ENCODE measurements at regions of chr15 and their contacts with region 1.

Region 1: GRCh38 chr15:44130778-44131177 is 64.3 kb downstream of the FRMD5 start:
- DNase-seq: peak; percentile 8
- H3K4me3 Mint-ChIP-seq: no peak overlapping the region
- H3K27ac Mint-ChIP-seq: no peak overlapping the region
- H3K4me1 Mint-ChIP-seq: no peaks in the 10 kb centered on the region
- H3K27me3 Mint-ChIP-seq: no peaks in the 10 kb centered on the region
- CTCF ChIP-seq: peak; percentile 58

Region 2: DNA sequence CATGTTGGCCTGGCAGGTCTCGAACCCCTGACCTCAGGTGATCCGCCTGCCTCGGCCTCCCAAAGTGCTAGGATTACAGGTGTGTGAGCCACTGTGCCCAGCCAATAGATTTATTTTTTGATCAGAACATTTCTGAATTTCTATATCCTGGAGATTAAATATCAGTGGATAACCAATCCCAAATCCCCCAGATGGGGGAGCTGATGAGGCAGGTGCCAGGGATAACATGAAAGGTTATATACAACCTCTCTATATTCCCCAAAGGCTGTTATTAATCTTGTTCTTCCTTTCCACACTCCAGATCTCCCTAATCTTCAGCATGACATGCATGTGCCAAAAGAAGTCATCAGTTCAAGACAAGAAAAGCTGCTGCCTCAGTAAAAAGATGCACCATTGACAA is 191.7 kb before region 1 on chr15:
- CTCF ChIA-PET with region 1: interaction called, 3 read pairs
- POLR2A ChIA-PET with region 1: no interaction called
- intact Hi-C with region 1: loop called (anchors 1 kb)
- DNase-seq: peak; percentile 47
- H3K4me3 Mint-ChIP-seq: no peak overlapping the region
- H3K27ac Mint-ChIP-seq: no peak overlapping the region
- H3K4me1 Mint-ChIP-seq: no peaks in the 10 kb centered on the region
- H3K27me3 Mint-ChIP-seq: no peaks in the 10 kb centered on the region
- CTCF ChIP-seq: peak; percentile 68

Region 3: GRCh38 chr15:44144184-44144583 is 13.4 kb after region 1 on chr15:
- CTCF ChIA-PET with region 1: no interaction called
- POLR2A ChIA-PET with region 1: no interaction called
- intact Hi-C with region 1: no loop called
- DNase-seq: no peak
- H3K4me3 Mint-ChIP-seq: no peak overlapping the region
- H3K27ac Mint-ChIP-seq: no peak overlapping the region
- H3K4me1 Mint-ChIP-seq: no peaks in the 10 kb centered on the region
- H3K27me3 Mint-ChIP-seq: no peaks in the 10 kb centered on the region
- CTCF ChIP-seq: no peak

Region 4: DNA sequence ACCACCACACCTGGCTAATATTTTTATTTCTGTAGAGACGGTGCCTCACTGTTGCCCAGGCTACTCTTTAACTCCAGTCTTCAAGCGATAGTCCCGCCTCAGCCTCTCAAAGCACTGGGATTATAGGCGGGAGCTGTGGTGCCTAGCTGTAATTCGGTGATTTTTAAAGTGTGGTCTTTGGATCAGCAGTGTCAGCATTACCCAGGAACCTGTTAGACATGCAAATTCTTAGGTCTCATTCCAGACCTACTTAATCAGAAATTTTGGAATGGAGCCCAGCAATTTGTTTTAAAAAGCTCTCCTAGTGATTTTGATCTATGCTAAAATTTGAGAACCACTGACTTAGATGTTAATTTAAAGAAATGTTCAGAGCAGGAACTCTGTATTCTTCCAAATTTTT is 209.6 kb after region 1 on chr15:
- CTCF ChIA-PET with region 1: no interaction called
- POLR2A ChIA-PET with region 1: no interaction called
- intact Hi-C with region 1: no loop called
- DNase-seq: peak; percentile 69
- H3K4me3 Mint-ChIP-seq: peak overlapping the region; percentile 46
- H3K27ac Mint-ChIP-seq: peak overlapping the region; percentile 85
- H3K4me1 Mint-ChIP-seq: peaks cover 8% of the 10 kb centered on the region
- H3K27me3 Mint-ChIP-seq: no peaks in the 10 kb centered on the region
- CTCF ChIP-seq: no peak

Region 5: GRCh38 chr15:44489464-44489863 is 358.7 kb after region 1 on chr15:
- CTCF ChIA-PET with region 1: no interaction called
- POLR2A ChIA-PET with region 1: no interaction called
- intact Hi-C with region 1: loop called (anchors 5 kb)
- DNase-seq: peak; percentile 70
- H3K4me3 Mint-ChIP-seq: no peak overlapping the region
- H3K27ac Mint-ChIP-seq: peak overlapping the region; percentile 36
- H3K4me1 Mint-ChIP-seq: peaks cover 27% of the 10 kb centered on the region
- H3K27me3 Mint-ChIP-seq: no peaks in the 10 kb centered on the region
- CTCF ChIP-seq: no peak